CD4-positive, alpha-beta T cell (primary cell): ENCODE measurements at regions of chr10 and their contacts with region 1.

Region 1: DNA sequence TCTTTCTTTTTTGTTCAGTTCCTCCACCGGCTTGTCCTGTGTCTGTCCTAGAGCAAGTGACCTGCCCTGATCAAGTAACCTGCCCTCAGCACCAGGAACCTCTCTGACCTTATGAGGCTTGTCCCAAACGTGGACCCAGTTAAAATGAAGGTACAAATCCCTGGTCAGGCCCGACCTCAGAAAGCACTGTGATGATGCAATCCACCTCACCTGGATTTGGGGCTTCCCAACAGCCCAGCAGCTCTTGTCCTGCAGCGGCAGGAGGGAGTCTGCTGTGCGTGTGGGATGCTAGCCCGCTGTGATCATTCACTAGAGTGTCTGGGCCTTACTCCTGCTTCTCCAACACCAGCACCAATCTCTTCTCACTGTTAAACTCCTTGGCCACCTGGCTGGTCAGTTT is 11.2 kb downstream of the COL17A1 start:
- DNase-seq: no peak
- ATAC-seq: no peak
- H3K4me3 ChIP-seq: no peak overlapping the region
- H3K4me3 Mint-ChIP-seq: no peak overlapping the region
- H3K27ac ChIP-seq: no peak overlapping the region
- H3K27ac Mint-ChIP-seq: no peak overlapping the region
- H3K4me1 ChIP-seq: peaks cover 2% of the 10 kb centered on the region
- H3K4me1 Mint-ChIP-seq: no peaks in the 10 kb centered on the region
- H3K27me3 ChIP-seq: no peaks in the 10 kb centered on the region
- H3K27me3 Mint-ChIP-seq: no peaks in the 10 kb centered on the region
- CTCF ChIP-seq: no peak

Region 2: GRCh38 chr10:104053201-104053600 is 21.3 kb before region 1 on chr10:
- CTCF ChIA-PET with region 1: no interaction called
- POLR2A ChIA-PET with region 1: no interaction called
- intact Hi-C with region 1: loop called in 1 of 2 experiments (anchors 1 kb)
- DNase-seq: no peak
- ATAC-seq: no peak
- H3K4me3 ChIP-seq: no peak overlapping the region
- H3K4me3 Mint-ChIP-seq: no peak overlapping the region
- H3K27ac ChIP-seq: no peak overlapping the region
- H3K27ac Mint-ChIP-seq: no peak overlapping the region
- H3K4me1 ChIP-seq: no peaks in the 10 kb centered on the region
- H3K4me1 Mint-ChIP-seq: no peaks in the 10 kb centered on the region
- H3K27me3 ChIP-seq: no peaks in the 10 kb centered on the region
- H3K27me3 Mint-ChIP-seq: no peaks in the 10 kb centered on the region
- CTCF ChIP-seq: no peak